Calu3 (cell line): ENCODE measurements at regions of chr3 and their contacts with region 1.

Region 1: GRCh38 chr3:170908235-170909116 is at the start of gene EIF5A2:
- DNase-seq: peak; percentile 94
- H3K4me3 Mint-ChIP-seq: peak within 1 kb of the TSS; percentile 86
- H3K27ac Mint-ChIP-seq: peak within 1 kb of the TSS; percentile 69
- H3K4me1 Mint-ChIP-seq: no peaks in the 10 kb centered on the region
- H3K27me3 Mint-ChIP-seq: no peaks in the 10 kb centered on the region
- CTCF ChIP-seq: peak; percentile 13
- total RNA-seq, gene EIF5A2: 9.4 and 10.4 TPM in 2 replicates

Region 2: GRCh38 chr3:170171563-170171962 is 736.9 kb before region 1 on chr3:
- CTCF ChIA-PET with region 1: no interaction called
- intact Hi-C with region 1: no loop called
- DNase-seq: no peak
- H3K4me3 Mint-ChIP-seq: no peak overlapping the region
- H3K27ac Mint-ChIP-seq: no peak overlapping the region
- H3K4me1 Mint-ChIP-seq: no peaks in the 10 kb centered on the region
- H3K27me3 Mint-ChIP-seq: no peaks in the 10 kb centered on the region
- CTCF ChIP-seq: no peak

Region 3: GRCh38 chr3:170869645-170870593 is 38.6 kb before region 1 on chr3 and contains the start of gene RPL22L1:
- CTCF ChIA-PET with region 1: no interaction called
- intact Hi-C with region 1: loop called (anchors 5 kb)
- DNase-seq: peak; percentile 97
- H3K4me3 Mint-ChIP-seq: peak within 1 kb of the TSS; percentile 93
- H3K27ac Mint-ChIP-seq: peak within 1 kb of the TSS; percentile 99
- H3K4me1 Mint-ChIP-seq: peaks cover 20% of the 10 kb centered on the region
- H3K27me3 Mint-ChIP-seq: no peaks in the 10 kb centered on the region
- CTCF ChIP-seq: no peak
- total RNA-seq, gene RPL22L1: 88.7 and 103 TPM in 2 replicates

Region 4: GRCh38 chr3:170953229-170953628 is 44.8 kb after region 1 on chr3:
- CTCF ChIA-PET with region 1: no interaction called
- intact Hi-C with region 1: no loop called
- DNase-seq: no peak
- H3K4me3 Mint-ChIP-seq: no peak overlapping the region
- H3K27ac Mint-ChIP-seq: no peak overlapping the region
- H3K4me1 Mint-ChIP-seq: no peaks in the 10 kb centered on the region
- H3K27me3 Mint-ChIP-seq: no peaks in the 10 kb centered on the region
- CTCF ChIP-seq: no peak